PC-3 (cell line): ENCODE measurements at regions of chr10 and their contacts with region 1.

Region 1: DNA sequence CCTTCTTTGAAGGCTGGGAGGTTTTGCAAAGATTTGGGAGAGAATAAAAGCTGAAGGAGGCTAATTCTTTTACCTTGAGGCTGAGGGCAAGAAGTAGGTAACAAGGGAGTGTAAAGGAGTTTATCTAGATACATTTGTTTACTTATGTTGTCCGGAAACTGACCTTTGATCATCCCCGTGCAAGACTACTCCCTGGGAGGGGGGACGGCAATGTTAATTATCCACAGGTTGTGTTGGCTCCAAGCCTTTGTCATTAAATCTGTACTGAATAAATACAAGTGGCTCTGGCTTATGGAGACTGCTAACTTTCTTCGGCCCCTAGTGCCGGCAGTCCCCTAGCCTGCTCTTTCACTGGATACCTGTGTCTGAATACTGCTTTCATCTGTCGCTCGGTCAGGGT is 1250.6 kb upstream of the LRRTM3 start:
- DNase-seq: no peak
- ATAC-seq: no peak
- H3K4me3 ChIP-seq: no peak overlapping the region
- H3K27ac ChIP-seq: no peak overlapping the region
- H3K4me1 ChIP-seq: no peaks in the 10 kb centered on the region
- H3K27me3 ChIP-seq: no peaks in the 10 kb centered on the region
- CTCF ChIP-seq: no peak

Region 2: DNA sequence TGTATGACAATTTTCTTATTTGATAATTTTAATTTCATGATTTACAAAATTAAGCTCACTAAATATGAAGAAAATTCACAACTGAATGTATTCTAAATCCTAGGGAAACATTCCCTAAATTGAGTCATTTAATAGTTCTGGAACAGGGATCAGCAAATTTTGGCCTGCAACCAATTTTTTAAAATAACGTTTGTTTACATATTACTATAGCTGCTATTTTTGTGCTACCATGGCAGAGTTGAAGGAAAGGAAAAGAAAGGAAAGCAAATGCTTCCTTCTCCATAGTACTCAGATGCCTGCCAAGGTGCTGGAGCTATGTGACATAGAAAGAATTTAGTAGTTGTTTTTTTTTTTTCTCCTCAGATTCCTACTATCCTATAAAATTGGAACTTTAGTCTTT is 57.1 kb before region 1 on chr10:
- CTCF ChIA-PET with region 1: no interaction called
- POLR2A ChIA-PET with region 1: no interaction called
- intact Hi-C with region 1: no loop called
- DNase-seq: peak; percentile 68
- ATAC-seq: peak; percentile 80
- H3K4me3 ChIP-seq: no peak overlapping the region
- H3K27ac ChIP-seq: no peak overlapping the region
- H3K4me1 ChIP-seq: peaks cover 3% of the 10 kb centered on the region; the same call in 1 of the 2 replicates
- H3K27me3 ChIP-seq: no peaks in the 10 kb centered on the region
- CTCF ChIP-seq: no peak

Region 3: DNA sequence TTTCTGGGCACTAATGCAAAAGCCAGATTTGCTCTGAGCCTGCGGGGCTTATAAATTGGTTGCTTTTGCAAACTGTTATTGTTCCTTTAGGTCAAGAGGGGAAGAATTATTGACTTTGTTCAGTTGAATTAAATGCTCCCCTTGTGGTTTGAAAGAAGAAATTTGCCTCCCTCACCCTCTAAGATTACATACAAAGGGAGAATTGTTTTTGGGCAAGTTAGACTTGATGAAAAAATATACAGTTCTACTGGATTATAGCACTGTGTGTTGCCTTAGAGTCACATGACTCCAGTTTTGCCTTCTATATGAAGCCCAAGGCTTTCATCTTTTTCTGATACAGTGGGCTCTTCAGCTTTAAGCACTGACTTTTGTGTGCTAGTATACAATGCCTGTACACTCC is 15.2 kb before region 1 on chr10:
- CTCF ChIA-PET with region 1: no interaction called
- POLR2A ChIA-PET with region 1: no interaction called
- intact Hi-C with region 1: no loop called
- DNase-seq: no peak
- ATAC-seq: no peak; the same call in 1 of the 2 replicates
- H3K4me3 ChIP-seq: no peak overlapping the region
- H3K27ac ChIP-seq: no peak overlapping the region
- H3K4me1 ChIP-seq: no peaks in the 10 kb centered on the region
- H3K27me3 ChIP-seq: no peaks in the 10 kb centered on the region
- CTCF ChIP-seq: no peak

Region 4: DNA sequence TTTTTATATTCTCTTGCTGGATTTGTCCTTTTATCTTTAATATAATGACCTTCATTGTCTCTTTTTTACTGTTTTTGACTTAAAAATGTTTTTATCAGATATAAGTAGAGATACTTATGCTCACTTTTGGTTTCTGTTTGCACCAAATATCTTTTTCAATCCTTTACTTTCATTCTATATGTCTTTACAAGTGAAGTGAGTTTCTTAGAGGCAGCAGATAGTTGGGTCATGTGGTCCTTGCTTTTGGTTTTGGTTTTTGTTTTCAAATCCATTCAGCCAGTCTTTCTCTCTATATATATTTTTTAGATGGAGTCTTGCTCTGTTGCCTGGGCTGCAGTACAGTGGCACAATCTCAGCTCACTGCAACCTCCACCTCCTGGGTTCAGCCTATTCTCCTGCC is 318.2 kb after region 1 on chr10:
- CTCF ChIA-PET with region 1: no interaction called
- POLR2A ChIA-PET with region 1: no interaction called
- intact Hi-C with region 1: no loop called
- DNase-seq: no peak
- ATAC-seq: no peak
- H3K4me3 ChIP-seq: no peak overlapping the region
- H3K27ac ChIP-seq: no peak overlapping the region
- H3K4me1 ChIP-seq: no peaks in the 10 kb centered on the region
- H3K27me3 ChIP-seq: no peaks in the 10 kb centered on the region
- CTCF ChIP-seq: no peak

Region 5: GRCh38 chr10:66162560-66163143 is 487.4 kb after region 1 on chr10:
- CTCF ChIA-PET with region 1: no interaction called
- POLR2A ChIA-PET with region 1: interaction called, 32 read pairs
- intact Hi-C with region 1: no loop called
- DNase-seq: peak; percentile 81
- ATAC-seq: peak; percentile 56
- H3K4me3 ChIP-seq: no peak overlapping the region
- H3K27ac ChIP-seq: no peak overlapping the region
- H3K4me1 ChIP-seq: peaks cover 12% of the 10 kb centered on the region
- H3K27me3 ChIP-seq: no peaks in the 10 kb centered on the region
- CTCF ChIP-seq: no peak